ENCODE measurements at regions of chr12 and their contacts with region 1.

Region 1: GRCh38 chr12:95117178-95117599 is 43.8 kb upstream of the NR2C1 start:
- DNase-seq: peak in 1 of 2 experiments; percentile 51
- H3K4me3 ChIP-seq: no peak overlapping the region
- H3K27ac ChIP-seq: no peak overlapping the region
- H3K4me1 ChIP-seq: peaks cover 0 to 11% (median 2%) of the 10 kb centered on the region in 4 experiments; a peak in 2 of 7 replicates
- H3K27me3 ChIP-seq: no peaks in the 10 kb centered on the region
- CTCF ChIP-seq: peak in 2 of 3 experiments; percentile 42 to 61; a peak in 2 of 4 replicates
- EP300 ChIP-seq: no peak
- POLR2A ChIP-seq: no peak
- RAD21 ChIP-seq: peak; percentile 73 to 77

Region 2: DNA sequence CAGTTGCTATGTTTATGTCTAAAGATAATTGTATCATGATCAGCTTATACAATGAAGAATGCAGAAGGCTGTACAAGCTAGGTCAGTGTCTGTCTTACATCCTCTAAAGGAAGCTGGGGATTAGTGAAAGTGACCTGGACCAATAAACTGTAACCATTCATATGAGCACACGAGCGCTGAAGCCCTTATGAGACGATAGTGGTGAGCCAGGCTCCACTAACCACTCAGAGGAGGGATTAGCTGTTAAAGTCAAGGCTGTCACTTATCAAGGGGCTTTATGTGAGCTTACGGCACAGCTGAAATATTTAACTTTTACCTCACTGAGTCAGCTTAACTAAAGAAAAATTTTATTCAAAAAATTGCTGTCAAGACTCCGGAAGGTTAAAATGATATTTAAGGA is 144.0 kb before region 1 on chr12:
- CTCF ChIA-PET with region 1: no interaction called
- POLR2A ChIA-PET with region 1: no interaction called
- DNase-seq: no peak
- H3K4me3 ChIP-seq: no peak overlapping the region
- H3K27ac ChIP-seq: no peak overlapping the region
- H3K4me1 ChIP-seq: no peaks in the 10 kb centered on the region
- H3K27me3 ChIP-seq: no peaks in the 10 kb centered on the region
- CTCF ChIP-seq: no peak
- EP300 ChIP-seq: no peak
- POLR2A ChIP-seq: no peak
- RAD21 ChIP-seq: no peak

Region 3: DNA sequence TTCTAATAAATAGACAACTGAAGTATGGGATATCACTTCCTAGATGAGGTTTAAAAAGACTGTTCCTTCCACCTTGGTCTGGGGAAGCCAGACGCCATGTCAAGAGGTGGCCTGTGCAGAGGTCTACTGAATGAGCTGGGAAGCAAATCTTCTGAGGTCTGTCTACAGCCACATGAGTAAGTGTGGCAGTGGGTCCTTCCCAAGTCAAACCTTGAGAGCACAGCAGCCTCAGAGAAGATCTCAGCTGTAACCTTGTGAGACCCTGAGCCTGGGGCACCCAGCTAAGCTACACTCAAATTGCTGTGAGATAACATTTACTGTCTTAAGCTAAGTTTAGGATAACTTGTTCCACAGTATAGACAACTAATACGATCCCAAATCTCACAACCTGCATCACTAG is 133.9 kb before region 1 on chr12:
- CTCF ChIA-PET with region 1: no interaction called
- POLR2A ChIA-PET with region 1: no interaction called
- DNase-seq: no peak
- H3K4me3 ChIP-seq: no peak overlapping the region
- H3K27ac ChIP-seq: no peak overlapping the region
- H3K4me1 ChIP-seq: peaks cover 0 to 6% (median 1%) of the 10 kb centered on the region in 4 experiments; a peak in 2 of 7 replicates
- H3K27me3 ChIP-seq: no peaks in the 10 kb centered on the region
- CTCF ChIP-seq: no peak
- EP300 ChIP-seq: no peak
- POLR2A ChIP-seq: no peak
- RAD21 ChIP-seq: no peak

Region 4: GRCh38 chr12:95100264-95101190 is 16.7 kb before region 1 on chr12:
- CTCF ChIA-PET with region 1: interaction called, 13 read pairs
- POLR2A ChIA-PET with region 1: interaction called, 3 read pairs
- DNase-seq: no peak
- H3K4me3 ChIP-seq: no peak overlapping the region
- H3K27ac ChIP-seq: no peak overlapping the region
- H3K4me1 ChIP-seq: no peaks in the 10 kb centered on the region
- H3K27me3 ChIP-seq: no peaks in the 10 kb centered on the region
- CTCF ChIP-seq: no peak
- EP300 ChIP-seq: no peak
- POLR2A ChIP-seq: no peak
- RAD21 ChIP-seq: no peak

Region 5: GRCh38 chr12:95143621-95144205 is 26.5 kb after region 1 on chr12:
- CTCF ChIA-PET with region 1: interaction called, 16 read pairs
- POLR2A ChIA-PET with region 1: no interaction called
- DNase-seq: no peak
- H3K4me3 ChIP-seq: no peak overlapping the region
- H3K27ac ChIP-seq: no peak overlapping the region
- H3K4me1 ChIP-seq: peaks cover 0 to 9% (median 8%) of the 10 kb centered on the region in 4 experiments; a peak in 3 of 7 replicates
- H3K27me3 ChIP-seq: no peaks in the 10 kb centered on the region
- CTCF ChIP-seq: no peak
- EP300 ChIP-seq: no peak
- POLR2A ChIP-seq: no peak
- RAD21 ChIP-seq: no peak

Region 6: DNA sequence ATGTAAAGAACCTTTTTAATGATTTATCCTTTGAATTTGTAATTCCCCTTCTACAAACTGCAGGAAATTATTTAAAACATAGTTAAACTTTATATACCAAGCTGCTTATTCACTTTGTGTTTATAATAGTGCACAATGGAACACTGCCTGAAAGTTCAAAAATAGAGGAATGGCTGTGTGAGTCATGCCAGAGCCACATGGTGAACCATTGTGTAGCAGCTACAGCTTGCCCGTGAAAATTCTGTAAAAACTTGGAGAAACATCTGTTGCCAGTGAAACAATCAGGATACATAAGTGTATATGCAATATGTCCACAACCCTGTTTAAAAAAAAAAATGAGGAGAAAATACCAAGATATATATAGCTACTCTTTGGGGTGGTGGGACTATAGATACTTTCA is 159.9 kb after region 1 on chr12:
- CTCF ChIA-PET with region 1: no interaction called
- POLR2A ChIA-PET with region 1: no interaction called
- DNase-seq: no peak
- H3K4me3 ChIP-seq: no peak overlapping the region
- H3K27ac ChIP-seq: no peak overlapping the region
- H3K4me1 ChIP-seq: no peaks in the 10 kb centered on the region
- H3K27me3 ChIP-seq: no peaks in the 10 kb centered on the region
- CTCF ChIP-seq: no peak
- EP300 ChIP-seq: no peak
- POLR2A ChIP-seq: no peak
- RAD21 ChIP-seq: no peak

Region 7: DNA sequence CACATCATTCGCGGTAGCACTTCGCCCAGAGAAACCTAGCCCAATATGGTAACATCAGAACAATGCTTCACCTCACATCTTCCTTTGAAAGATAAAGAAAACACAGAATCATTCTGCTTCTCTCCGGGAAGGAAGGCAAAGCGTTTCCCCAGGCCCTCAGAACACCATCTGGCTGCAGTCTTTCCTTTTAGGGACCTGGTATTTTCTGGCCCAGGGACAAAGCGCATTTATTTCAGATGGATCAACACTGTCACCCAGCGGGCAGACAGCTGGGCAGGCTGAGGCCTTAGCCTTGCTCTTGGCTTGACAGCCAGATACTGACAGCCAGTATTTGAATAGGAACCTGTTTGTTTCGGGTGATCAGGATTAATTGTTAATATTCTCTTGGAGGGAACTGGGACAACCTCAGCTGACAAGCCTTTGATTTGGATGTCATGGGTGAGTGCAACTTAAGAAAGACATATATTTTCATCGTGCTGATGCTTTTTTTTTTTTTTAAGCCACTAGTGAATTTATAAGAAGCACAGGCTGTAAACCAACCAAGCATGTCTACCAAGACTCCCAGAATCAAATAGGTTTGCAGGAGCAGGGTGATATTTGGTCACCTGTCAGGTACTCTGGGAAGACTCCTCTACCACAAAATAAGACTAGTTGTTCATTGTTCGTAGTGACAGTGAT is 219.3 kb after region 1 on chr12:
- CTCF ChIA-PET with region 1: interaction called, 17 read pairs
- POLR2A ChIA-PET with region 1: no interaction called
- DNase-seq: peak; percentile 74 to 78
- H3K4me3 ChIP-seq: no peak overlapping the region; a peak in 1 of 8 replicates
- H3K27ac ChIP-seq: no peak overlapping the region
- H3K4me1 ChIP-seq: no peaks in the 10 kb centered on the region
- H3K27me3 ChIP-seq: no peaks in the 10 kb centered on the region
- CTCF ChIP-seq: peak; percentile 89 to 94 (median 89)
- EP300 ChIP-seq: peak in 1 of 2 experiments; percentile 71; a peak in 1 of 3 replicates
- POLR2A ChIP-seq: no peak
- RAD21 ChIP-seq: peak; percentile 99 to 100

Measured in H1 (cell line).